ENCODE measurements at regions of chr2 and their contacts with region 1.

Region 1: DNA sequence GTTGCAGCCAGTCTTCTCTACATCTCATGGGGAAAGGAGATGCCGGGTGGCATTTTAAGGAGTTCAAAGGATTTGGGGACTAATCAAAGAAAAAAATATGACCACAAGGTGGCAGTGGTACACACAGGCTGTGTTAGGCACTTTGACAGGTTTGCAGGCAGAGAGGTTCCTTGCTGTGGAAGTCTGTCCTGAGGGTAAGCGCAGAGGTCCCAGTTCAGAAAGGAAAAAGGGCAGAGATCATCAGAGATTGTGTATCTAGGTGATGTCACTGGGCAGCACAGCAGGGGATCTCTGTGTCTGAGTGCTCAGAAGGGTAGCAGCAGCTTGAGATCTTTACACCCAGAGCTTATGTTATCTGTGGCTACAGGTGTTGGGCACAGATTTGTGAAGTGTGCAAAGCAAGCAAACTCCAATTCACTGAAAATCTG is 231.4 kb downstream of the LRRTM1 start:
- DNase-seq: peak; percentile 61
- H3K4me3 ChIP-seq: no peak overlapping the region; a peak in 1 of 4 replicates
- H3K27ac ChIP-seq: no peak overlapping the region; a peak in 1 of 4 replicates
- H3K4me1 ChIP-seq: peaks cover 0 to 4% of the 10 kb centered on the region in 2 experiments; a peak in 1 of 4 replicates
- H3K27me3 ChIP-seq: no peaks in the 10 kb centered on the region; the same call in 1 of the 2 replicates
- CTCF ChIP-seq: peak; percentile 74
- EP300 ChIP-seq: no peak
- RAD21 ChIP-seq: peak; percentile 85

Region 2: DNA sequence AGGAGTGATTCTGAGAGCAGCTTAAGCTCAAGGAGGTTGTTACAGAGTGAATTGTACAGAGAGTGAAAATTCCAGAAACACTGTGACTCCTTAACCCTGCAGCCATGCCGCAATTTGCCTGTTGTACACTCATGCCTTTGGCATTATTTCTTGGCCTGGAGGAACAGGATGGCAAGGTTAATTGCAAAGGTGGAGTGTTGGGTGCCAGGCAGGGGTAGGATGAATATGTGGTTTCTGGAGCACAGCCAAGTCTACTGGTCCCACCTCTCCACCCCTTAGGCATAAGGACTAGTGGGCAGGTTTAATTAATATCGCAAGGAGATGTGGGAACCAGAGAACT is 18.8 kb before region 1 on chr2:
- CTCF ChIA-PET with region 1: interaction called, 15 read pairs
- POLR2A ChIA-PET with region 1: no interaction called
- DNase-seq: no peak
- H3K4me3 ChIP-seq: no peak overlapping the region
- H3K27ac ChIP-seq: no peak overlapping the region; a peak in 1 of 4 replicates
- H3K4me1 ChIP-seq: peaks cover 0 to 23% of the 10 kb centered on the region in 2 experiments; a peak in 3 of 4 replicates
- H3K27me3 ChIP-seq: no peaks in the 10 kb centered on the region; the same call in 1 of the 2 replicates
- CTCF ChIP-seq: no peak
- EP300 ChIP-seq: no peak
- RAD21 ChIP-seq: no peak

Region 3: GRCh38 chr2:80059447-80059846 is 13.7 kb before region 1 on chr2:
- CTCF ChIA-PET with region 1: interaction called, 18 read pairs
- POLR2A ChIA-PET with region 1: no interaction called
- DNase-seq: no peak
- H3K4me3 ChIP-seq: no peak overlapping the region
- H3K27ac ChIP-seq: no peak overlapping the region
- H3K4me1 ChIP-seq: peaks cover 0 to 6% of the 10 kb centered on the region in 2 experiments; a peak in 2 of 4 replicates
- H3K27me3 ChIP-seq: no peaks in the 10 kb centered on the region; the same call in 1 of the 2 replicates
- CTCF ChIP-seq: no peak
- EP300 ChIP-seq: no peak
- RAD21 ChIP-seq: no peak

Region 4: DNA sequence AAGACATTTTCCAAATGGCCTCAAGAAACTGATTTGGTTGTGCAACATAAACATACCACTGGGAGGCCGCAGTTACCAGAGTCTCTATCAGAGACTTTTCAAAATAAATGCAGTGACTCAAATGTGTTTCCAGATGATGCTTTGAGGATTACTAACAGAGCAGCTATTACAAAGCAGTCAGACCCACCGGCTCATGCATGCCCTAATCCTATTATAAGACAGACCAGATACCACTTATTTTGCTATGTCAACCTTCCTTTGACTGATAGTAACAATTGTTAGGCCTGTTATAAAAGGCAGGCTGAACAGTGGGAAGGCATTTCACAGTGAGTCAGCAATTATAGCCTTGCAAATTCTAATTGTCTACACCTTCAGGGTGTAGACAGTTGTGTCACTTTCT is 13.7 kb after region 1 on chr2:
- CTCF ChIA-PET with region 1: interaction called, 10 read pairs
- POLR2A ChIA-PET with region 1: no interaction called
- DNase-seq: peak; percentile 63
- H3K4me3 ChIP-seq: no peak overlapping the region
- H3K27ac ChIP-seq: peak overlapping the region in 1 of 2 experiments; percentile 93; a peak in 2 of 4 replicates
- H3K4me1 ChIP-seq: peaks cover 0 to 31% of the 10 kb centered on the region in 2 experiments; a peak in 2 of 4 replicates
- H3K27me3 ChIP-seq: no peaks in the 10 kb centered on the region
- CTCF ChIP-seq: peak; percentile 29; the same call in 1 of the 2 replicates
- EP300 ChIP-seq: peak in 1 of 2 experiments; percentile 75; a peak in 1 of 4 replicates
- RAD21 ChIP-seq: peak; percentile 35

Region 5: GRCh38 chr2:80238692-80239469 is 165.7 kb after region 1 on chr2:
- CTCF ChIA-PET with region 1: interaction called, 16 read pairs
- POLR2A ChIA-PET with region 1: no interaction called
- DNase-seq: peak; percentile 24
- H3K4me3 ChIP-seq: no peak overlapping the region
- H3K27ac ChIP-seq: no peak overlapping the region
- H3K4me1 ChIP-seq: peaks cover 0 to 6% of the 10 kb centered on the region in 2 experiments; a peak in 1 of 4 replicates
- H3K27me3 ChIP-seq: no peaks in the 10 kb centered on the region
- CTCF ChIP-seq: peak; percentile 80
- EP300 ChIP-seq: no peak
- RAD21 ChIP-seq: peak; percentile 56

Region 6: GRCh38 chr2:80303909-80304837 is 231.0 kb after region 1 on chr2 and contains the start of gene LRRTM1:
- CTCF ChIA-PET with region 1: interaction called, 10 read pairs
- POLR2A ChIA-PET with region 1: no interaction called
- DNase-seq: peak; percentile 78
- H3K4me3 ChIP-seq: peak within 1 kb of the TSS; percentile 51 to 57
- H3K27ac ChIP-seq: no peak within 1 kb of the TSS
- H3K4me1 ChIP-seq: peaks cover 0 to 24% of the 10 kb centered on the region in 2 experiments; a peak in 1 of 4 replicates
- H3K27me3 ChIP-seq: peaks cover 32% of the 10 kb centered on the region
- CTCF ChIP-seq: no peak
- EP300 ChIP-seq: no peak
- RAD21 ChIP-seq: peak; percentile 45
- polyA plus RNA-seq, gene LRRTM1: 1.1 and 1.6 TPM in 2 replicates

Region 7: GRCh38 chr2:80476535-80477117 is 403.5 kb after region 1 on chr2:
- CTCF ChIA-PET with region 1: no interaction called
- POLR2A ChIA-PET with region 1: no interaction called
- DNase-seq: peak; percentile 8
- H3K4me3 ChIP-seq: no peak overlapping the region
- H3K27ac ChIP-seq: no peak overlapping the region
- H3K4me1 ChIP-seq: peaks cover 0 to 9% of the 10 kb centered on the region in 2 experiments; a peak in 2 of 4 replicates
- H3K27me3 ChIP-seq: no peaks in the 10 kb centered on the region
- CTCF ChIP-seq: no peak
- EP300 ChIP-seq: no peak
- RAD21 ChIP-seq: no peak

Region 8: DNA sequence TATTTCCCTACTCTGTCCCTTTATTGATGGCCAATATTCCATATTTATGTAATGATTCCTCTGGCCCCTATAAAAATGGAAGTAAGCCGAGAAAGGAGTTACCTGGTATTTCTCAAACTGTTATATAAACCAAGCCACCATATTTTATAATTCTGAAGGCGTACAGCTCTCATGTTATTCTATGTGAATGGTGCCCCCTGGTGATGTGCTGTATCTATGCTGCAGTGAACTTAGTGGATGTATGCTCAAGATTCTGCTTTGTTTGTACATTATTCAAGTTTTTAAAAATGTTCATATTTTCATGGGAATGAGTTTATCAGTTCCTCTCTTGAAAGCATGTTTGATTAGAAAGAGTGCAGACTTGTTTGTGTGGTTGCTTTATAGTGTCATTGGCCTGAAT is 425.9 kb after region 1 on chr2:
- CTCF ChIA-PET with region 1: interaction called, 22 read pairs
- POLR2A ChIA-PET with region 1: no interaction called
- DNase-seq: peak; percentile 30
- H3K4me3 ChIP-seq: no peak overlapping the region; a peak in 1 of 4 replicates
- H3K27ac ChIP-seq: no peak overlapping the region
- H3K4me1 ChIP-seq: peaks cover 0 to 11% of the 10 kb centered on the region in 2 experiments; a peak in 3 of 4 replicates
- H3K27me3 ChIP-seq: no peaks in the 10 kb centered on the region
- CTCF ChIP-seq: peak; percentile 88
- EP300 ChIP-seq: no peak
- RAD21 ChIP-seq: peak; percentile 96